Adrenal gland (tissue), 19 donors: ENCODE measurements at regions of chr6 and their contacts with region 1.

Region 1: DNA sequence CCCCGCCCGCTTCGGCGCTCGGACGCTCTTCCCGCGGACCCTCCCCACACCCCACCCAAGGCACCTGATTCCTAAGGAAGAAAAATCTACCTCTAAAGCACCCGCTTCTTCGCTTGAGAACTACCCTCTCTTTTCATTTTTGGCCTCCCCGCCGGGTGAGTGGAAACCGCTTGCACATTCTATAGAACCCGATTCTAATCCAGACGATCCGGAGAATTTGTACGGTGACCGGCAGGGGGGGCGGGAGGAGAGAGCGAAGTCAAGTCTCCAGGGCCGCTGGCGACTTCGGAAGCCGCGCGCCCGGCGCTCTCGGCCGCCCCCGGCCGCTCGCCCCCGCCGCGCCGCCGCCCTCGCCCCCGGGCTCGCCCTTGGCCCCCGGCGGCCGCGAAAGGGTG is at the start of gene RBM24:
- DNase-seq: peak; percentile 38 to 69 (median 57)
- H3K4me3 ChIP-seq: peak within 1 kb of the TSS in 3 of 4 donors; percentile 11 to 72 (median 58)
- H3K27ac ChIP-seq: no peak within 1 kb of the TSS
- H3K4me1 ChIP-seq: peaks cover 11 to 13% of the 10 kb centered on the region in 2 donors
- H3K27me3 ChIP-seq: peaks cover 3% of the 10 kb centered on the region
- CTCF ChIP-seq: peak in 3 of 6 experiments; percentile 7 to 47 (median 14)
- POLR2A ChIP-seq: no peak
- total RNA-seq, gene RBM24: 0.11 to 1.0 (median 0.23) TPM in 6 of 9 donors, not detected in the others

Region 2: DNA sequence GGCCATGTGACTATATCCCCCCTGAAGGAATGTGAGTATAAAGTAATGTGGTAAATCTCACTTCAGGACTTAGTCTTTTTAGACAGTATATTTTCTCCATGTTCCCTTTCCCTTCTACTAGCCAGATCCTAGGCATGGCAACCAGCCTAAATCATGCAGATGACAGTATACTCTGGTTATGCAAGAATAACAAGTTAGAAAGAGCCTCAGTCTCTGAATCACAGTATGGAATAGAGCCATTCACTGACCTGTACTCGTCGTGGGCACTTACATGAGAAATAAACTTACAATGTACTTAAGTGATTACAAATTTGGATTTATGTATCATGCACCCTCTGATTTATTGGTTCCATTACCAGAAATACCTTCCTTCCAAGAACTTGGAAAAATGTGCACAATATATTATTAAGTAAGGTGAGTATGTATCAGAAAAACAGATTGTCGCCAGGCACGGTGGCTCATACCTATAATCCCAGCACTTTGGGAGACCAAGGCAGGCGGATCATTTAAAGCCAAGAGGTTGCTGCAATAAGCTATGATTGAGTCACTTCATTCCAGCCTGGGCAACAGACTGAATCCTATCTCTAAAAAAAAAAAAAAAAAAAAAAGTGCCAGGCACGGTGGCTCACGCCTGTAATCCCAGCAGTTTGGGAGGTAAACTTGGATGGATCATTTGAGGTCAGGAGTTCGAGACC is 293.9 kb after region 1 on chr6:
- intact Hi-C with region 1: loop called in 1 of 2 experiments (anchors 10 kb)
- DNase-seq: peak in 2 of 7 donors; percentile 26 to 29
- H3K4me3 ChIP-seq: no peak overlapping the region
- H3K27ac ChIP-seq: no peak overlapping the region
- H3K4me1 ChIP-seq: peaks cover 0 to 1% of the 10 kb centered on the region in 2 donors
- H3K27me3 ChIP-seq: no peaks in the 10 kb centered on the region
- CTCF ChIP-seq: no peak
- POLR2A ChIP-seq: no peak